Keratinocyte (primary cell): ENCODE measurements at regions of chr2 and their contacts with region 1.

Region 1: GRCh38 chr2:234500394-234501006 is 3.6 kb upstream of the ARL4C start:
- DNase-seq: no peak
- H3K4me3 ChIP-seq: no peak overlapping the region
- H3K27ac ChIP-seq: no peak overlapping the region
- H3K4me1 ChIP-seq: peaks cover 15% of the 10 kb centered on the region
- H3K27me3 ChIP-seq: no peaks in the 10 kb centered on the region
- CTCF ChIP-seq: peak; percentile 60 to 75 (median 69)

Region 2: GRCh38 chr2:233638836-233639235 is 861.7 kb before region 1 on chr2:
- dilution Hi-C with region 1: no loop called
- DNase-seq: no peak
- H3K4me3 ChIP-seq: no peak overlapping the region
- H3K27ac ChIP-seq: no peak overlapping the region
- H3K4me1 ChIP-seq: peaks cover 3% of the 10 kb centered on the region
- H3K27me3 ChIP-seq: no peaks in the 10 kb centered on the region
- CTCF ChIP-seq: peak in 1 of 3 experiments; percentile 7

Region 3: GRCh38 chr2:233974530-233975071 is 525.9 kb before region 1 on chr2:
- dilution Hi-C with region 1: loop called (anchors 25 kb)
- DNase-seq: peak; percentile 85
- H3K4me3 ChIP-seq: no peak overlapping the region
- H3K27ac ChIP-seq: peak overlapping the region; percentile 3
- H3K4me1 ChIP-seq: peaks cover 36% of the 10 kb centered on the region
- H3K27me3 ChIP-seq: no peaks in the 10 kb centered on the region
- CTCF ChIP-seq: no peak

Region 4: DNA sequence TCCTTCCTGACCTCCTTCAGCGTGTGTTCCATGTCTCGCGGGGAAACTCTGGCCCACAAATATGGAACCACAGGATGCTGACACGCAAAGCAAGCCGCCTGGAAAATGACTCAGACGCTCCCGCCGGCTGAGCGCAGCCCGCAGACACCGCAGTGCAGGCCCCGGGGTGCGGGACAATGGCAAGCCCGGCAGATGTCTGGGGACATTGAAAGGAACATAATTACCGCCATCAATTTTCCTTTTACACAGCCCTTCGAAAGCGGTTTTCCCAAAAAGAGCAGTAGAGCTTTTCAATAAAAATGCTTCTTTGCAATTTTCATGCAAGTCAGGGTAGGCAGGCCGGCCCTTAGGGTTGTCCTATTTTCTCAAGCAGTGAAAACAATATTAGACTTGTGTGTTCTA is 292.1 kb after region 1 on chr2:
- dilution Hi-C with region 1: no loop called
- DNase-seq: no peak
- H3K4me3 ChIP-seq: no peak overlapping the region
- H3K27ac ChIP-seq: no peak overlapping the region
- H3K4me1 ChIP-seq: no peaks in the 10 kb centered on the region
- H3K27me3 ChIP-seq: peaks cover 10% of the 10 kb centered on the region
- CTCF ChIP-seq: no peak

Region 5: DNA sequence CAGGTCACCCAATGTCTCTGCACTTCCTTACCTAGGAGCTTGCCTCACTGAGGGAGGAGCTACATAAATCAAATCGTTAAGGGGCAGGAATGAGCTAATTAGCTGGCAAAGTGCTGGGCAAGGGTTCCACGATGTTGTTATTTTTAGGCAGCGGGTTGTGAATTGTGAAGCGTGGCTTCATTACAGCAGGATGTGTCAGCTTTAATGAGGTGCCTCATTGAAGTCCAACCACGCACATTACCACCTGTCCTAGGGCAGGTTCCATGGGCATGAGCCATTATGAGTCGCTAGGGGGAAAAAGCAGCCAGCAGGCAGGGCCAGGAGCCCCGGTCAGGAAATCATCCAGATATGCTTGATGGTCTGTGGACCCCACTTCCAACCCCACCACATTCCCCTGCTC is 866.3 kb after region 1 on chr2:
- dilution Hi-C with region 1: no loop called
- DNase-seq: no peak
- H3K4me3 ChIP-seq: no peak overlapping the region
- H3K27ac ChIP-seq: no peak overlapping the region
- H3K4me1 ChIP-seq: peaks cover 5% of the 10 kb centered on the region
- H3K27me3 ChIP-seq: peaks cover 7% of the 10 kb centered on the region
- CTCF ChIP-seq: no peak